Natural killer cell (primary cell): ENCODE measurements at regions of chr1 and their contacts with region 1.

Region 1: DNA sequence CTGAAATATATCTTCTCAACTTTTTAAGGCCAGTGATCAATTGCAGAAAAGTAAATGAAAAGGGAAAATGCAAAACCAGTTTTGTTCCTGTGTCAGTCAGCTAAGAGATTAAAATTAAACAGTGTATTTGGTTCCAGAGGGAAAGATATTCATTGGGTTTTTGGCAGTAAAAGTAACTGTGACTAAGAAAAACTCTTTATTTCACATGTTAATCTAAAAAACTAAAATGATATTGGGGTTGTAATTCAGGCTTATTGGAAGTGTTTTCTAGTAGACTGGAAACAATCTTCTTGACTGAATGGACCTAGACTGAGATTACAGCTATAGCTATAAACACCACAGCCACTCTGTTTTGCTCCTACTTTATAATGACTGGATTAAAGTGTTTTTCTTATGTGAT is 413.9 kb downstream of the ADGRL2 start:
- DNase-seq: no peak
- ATAC-seq: no peak
- H3K4me3 ChIP-seq: no peak overlapping the region
- H3K4me3 Mint-ChIP-seq: no peak overlapping the region
- H3K27ac ChIP-seq: no peak overlapping the region
- H3K27ac Mint-ChIP-seq: no peak overlapping the region
- H3K4me1 ChIP-seq: no peaks in the 10 kb centered on the region
- H3K4me1 Mint-ChIP-seq: no peaks in the 10 kb centered on the region
- H3K27me3 ChIP-seq: no peaks in the 10 kb centered on the region
- H3K27me3 Mint-ChIP-seq: no peaks in the 10 kb centered on the region
- CTCF ChIP-seq: no peak

Region 2: GRCh38 chr1:81670286-81670685 is 544.3 kb before region 1 on chr1:
- intact Hi-C with region 1: no loop called
- DNase-seq: no peak
- ATAC-seq: no peak
- H3K4me3 ChIP-seq: no peak overlapping the region
- H3K4me3 Mint-ChIP-seq: no peak overlapping the region
- H3K27ac ChIP-seq: no peak overlapping the region
- H3K27ac Mint-ChIP-seq: no peak overlapping the region
- H3K4me1 ChIP-seq: no peaks in the 10 kb centered on the region
- H3K4me1 Mint-ChIP-seq: no peaks in the 10 kb centered on the region
- H3K27me3 ChIP-seq: no peaks in the 10 kb centered on the region
- H3K27me3 Mint-ChIP-seq: no peaks in the 10 kb centered on the region
- CTCF ChIP-seq: no peak

Region 3: DNA sequence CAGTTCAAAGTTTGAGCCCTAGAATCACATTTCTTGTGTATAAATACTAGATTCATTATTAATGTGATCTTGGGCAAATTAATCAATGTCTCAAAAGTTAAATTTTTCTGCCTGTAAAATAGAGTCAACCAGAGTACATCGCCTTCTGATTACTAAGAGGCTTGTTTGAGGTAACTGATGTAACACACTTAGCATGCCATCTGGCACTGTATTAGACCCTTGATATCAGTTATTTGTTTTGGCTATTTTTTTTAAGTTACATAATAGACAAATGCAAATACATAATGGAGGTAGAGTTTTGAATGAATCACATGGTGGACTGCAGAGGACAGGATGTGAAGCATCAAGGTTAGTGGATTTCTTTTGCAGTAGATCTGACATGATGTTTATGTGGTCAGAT is 115.4 kb before region 1 on chr1:
- intact Hi-C with region 1: no loop called
- DNase-seq: no peak
- ATAC-seq: no peak
- H3K4me3 ChIP-seq: no peak overlapping the region
- H3K4me3 Mint-ChIP-seq: no peak overlapping the region
- H3K27ac ChIP-seq: no peak overlapping the region
- H3K27ac Mint-ChIP-seq: no peak overlapping the region
- H3K4me1 ChIP-seq: no peaks in the 10 kb centered on the region
- H3K4me1 Mint-ChIP-seq: no peaks in the 10 kb centered on the region
- H3K27me3 ChIP-seq: no peaks in the 10 kb centered on the region
- H3K27me3 Mint-ChIP-seq: no peaks in the 10 kb centered on the region
- CTCF ChIP-seq: no peak

Region 4: GRCh38 chr1:82152356-82153272 is 62.0 kb before region 1 on chr1:
- intact Hi-C with region 1: no loop called
- DNase-seq: no peak
- ATAC-seq: no peak
- H3K4me3 ChIP-seq: no peak overlapping the region
- H3K4me3 Mint-ChIP-seq: peak overlapping the region; percentile 49
- H3K27ac ChIP-seq: no peak overlapping the region
- H3K27ac Mint-ChIP-seq: no peak overlapping the region
- H3K4me1 ChIP-seq: no peaks in the 10 kb centered on the region
- H3K4me1 Mint-ChIP-seq: peaks cover 20 to 26% of the 10 kb centered on the region in 2 donors
- H3K27me3 ChIP-seq: no peaks in the 10 kb centered on the region
- H3K27me3 Mint-ChIP-seq: no peaks in the 10 kb centered on the region
- CTCF ChIP-seq: no peak

Region 5: GRCh38 chr1:82499022-82499421 is 284.4 kb after region 1 on chr1:
- intact Hi-C with region 1: loop called (anchors 5 kb)
- DNase-seq: no peak
- ATAC-seq: no peak
- H3K4me3 ChIP-seq: no peak overlapping the region
- H3K4me3 Mint-ChIP-seq: no peak overlapping the region
- H3K27ac ChIP-seq: no peak overlapping the region
- H3K27ac Mint-ChIP-seq: no peak overlapping the region
- H3K4me1 ChIP-seq: no peaks in the 10 kb centered on the region
- H3K4me1 Mint-ChIP-seq: no peaks in the 10 kb centered on the region
- H3K27me3 ChIP-seq: no peaks in the 10 kb centered on the region
- H3K27me3 Mint-ChIP-seq: no peaks in the 10 kb centered on the region
- CTCF ChIP-seq: no peak